Activated CD4-positive, alpha-beta T cell treated with anti-CD3 and anti-CD28 coated beads, Interleukin-2, amount 10 ng/mL, durations not matched to agents 24 days and 14 days (primary cell): ENCODE measurements at regions of chr11 and their contacts with region 1.

Region 1: GRCh38 chr11:33208150-33208549 is 46.9 kb upstream of the CSTF3 start:
- DNase-seq: no peak
- H3K4me3 Mint-ChIP-seq: no peak overlapping the region
- H3K27ac Mint-ChIP-seq: no peak overlapping the region
- H3K4me1 Mint-ChIP-seq: no peaks in the 10 kb centered on the region
- H3K27me3 Mint-ChIP-seq: peaks cover 2% of the 10 kb centered on the region

Region 2: DNA sequence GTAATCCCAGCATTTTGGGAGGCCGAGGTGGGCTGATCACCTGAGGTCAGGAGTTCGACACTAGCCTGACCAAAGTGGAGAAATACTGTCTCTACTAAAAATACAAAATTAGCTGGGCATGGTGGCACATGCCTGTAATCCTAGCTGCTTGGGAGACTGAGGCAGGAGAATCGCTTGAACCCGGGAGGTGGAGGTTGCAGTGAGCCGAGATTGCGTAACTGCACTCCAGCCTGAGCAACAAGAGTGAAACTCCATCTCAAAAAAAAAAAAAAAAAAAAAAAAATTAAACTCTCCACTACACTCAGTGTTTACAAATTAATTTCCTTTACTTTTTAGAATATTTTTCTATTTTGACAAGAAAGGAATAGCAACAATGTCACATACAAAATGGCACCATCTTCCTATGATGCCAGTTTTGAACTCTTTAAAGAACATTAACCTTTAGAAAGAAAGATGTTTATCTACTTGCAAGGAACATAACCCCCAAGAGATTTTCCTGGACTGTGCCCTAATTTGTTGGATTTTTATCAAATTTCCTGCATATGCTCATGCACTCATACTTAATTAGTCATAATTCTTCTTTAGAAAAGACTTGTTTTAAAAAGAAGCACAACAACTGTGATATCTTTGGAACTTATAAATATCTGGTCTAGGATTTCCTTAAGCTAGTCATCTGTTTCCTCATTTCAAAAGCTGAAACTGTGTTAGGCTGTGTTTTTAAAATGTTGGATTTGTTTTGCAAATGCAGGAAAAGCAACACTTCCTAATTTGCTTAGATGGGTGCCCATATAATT is 26.4 kb after region 1 on chr11:
- intact Hi-C with region 1: no loop called
- DNase-seq: no peak
- H3K4me3 Mint-ChIP-seq: no peak overlapping the region
- H3K27ac Mint-ChIP-seq: no peak overlapping the region
- H3K4me1 Mint-ChIP-seq: no peaks in the 10 kb centered on the region
- H3K27me3 Mint-ChIP-seq: no peaks in the 10 kb centered on the region

Region 3: GRCh38 chr11:33269822-33270221 is 61.7 kb after region 1 on chr11:
- intact Hi-C with region 1: loop called (anchors 2 kb)
- DNase-seq: no peak
- H3K4me3 Mint-ChIP-seq: no peak overlapping the region
- H3K27ac Mint-ChIP-seq: no peak overlapping the region
- H3K4me1 Mint-ChIP-seq: peaks cover 12% of the 10 kb centered on the region
- H3K27me3 Mint-ChIP-seq: no peaks in the 10 kb centered on the region